Activated CD8-positive, alpha-beta T cell treated with anti-CD3 and anti-CD28 coated beads for 36 hours (primary cell): ENCODE measurements at regions of chr14 and their contacts with region 1.

Region 1: GRCh38 chr14:93655078-93655750 is 133.1 kb downstream of the PRIMA1 start:
- DNase-seq: peak; percentile 6
- ATAC-seq: no peak
- H3K4me3 Mint-ChIP-seq: no peak overlapping the region
- H3K27ac Mint-ChIP-seq: no peak overlapping the region
- H3K4me1 Mint-ChIP-seq: no peaks in the 10 kb centered on the region
- H3K27me3 Mint-ChIP-seq: peaks cover 17% of the 10 kb centered on the region
- CTCF ChIP-seq: peak; percentile 62

Region 2: DNA sequence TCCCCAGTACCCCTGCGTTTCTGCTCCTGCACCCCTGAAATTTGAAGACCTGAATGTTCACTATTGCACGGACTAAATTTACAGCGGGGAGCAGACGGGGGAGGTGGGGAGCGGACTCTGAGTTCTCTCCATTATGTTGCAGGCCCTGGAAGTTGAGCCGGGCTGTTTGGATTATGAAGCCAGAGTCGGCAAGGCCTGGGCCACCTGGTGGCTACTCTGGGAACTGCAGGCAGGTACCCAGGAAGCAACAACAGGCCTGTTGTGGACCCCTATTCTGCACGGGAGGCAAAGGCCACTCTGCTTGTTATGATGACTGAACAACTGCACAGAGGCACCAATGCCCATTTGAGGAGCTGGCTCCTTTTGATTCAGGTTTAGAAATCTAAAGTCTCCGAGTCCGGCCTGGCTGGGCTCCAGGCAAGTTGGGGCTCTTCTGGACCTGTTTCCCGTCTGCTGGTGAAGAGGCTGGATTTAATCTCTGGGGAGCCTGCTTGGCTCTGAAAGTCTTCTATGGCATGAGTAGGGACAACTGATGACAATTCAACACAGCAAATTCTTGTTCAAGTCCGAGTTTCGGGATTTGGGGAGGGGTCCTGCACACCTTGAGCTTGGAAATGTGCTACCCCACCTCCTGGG is 237.8 kb after region 1 on chr14:
- CTCF ChIA-PET with region 1: interaction called, 10 read pairs
- POLR2A ChIA-PET with region 1: no interaction called
- intact Hi-C with region 1: loop called (anchors 5 kb)
- DNase-seq: peak; percentile 84
- ATAC-seq: peak; percentile 87
- H3K4me3 Mint-ChIP-seq: no peak overlapping the region
- H3K27ac Mint-ChIP-seq: no peak overlapping the region
- H3K4me1 Mint-ChIP-seq: no peaks in the 10 kb centered on the region
- H3K27me3 Mint-ChIP-seq: peaks cover 11% of the 10 kb centered on the region
- CTCF ChIP-seq: peak; percentile 96